ENCODE measurements at regions of chr2 and their contacts with region 1.

Region 1: GRCh38 chr2:162795312-162795711 is 43.3 kb downstream of the KCNH7 start:
- DNase-seq: peak; percentile 27
- ATAC-seq: peak; percentile 92
- H3K4me3 ChIP-seq: no peak overlapping the region
- H3K27ac ChIP-seq: no peak overlapping the region
- H3K4me1 ChIP-seq: 0 out of 2 replicates have a peak, but pooled peaks cover 6% of the 10 kb centered on the region
- H3K27me3 ChIP-seq: no peaks in the 10 kb centered on the region
- CTCF ChIP-seq: peak; percentile 75
- EP300 ChIP-seq: no peak
- POLR2A ChIP-seq: no peak
- RAD21 ChIP-seq: peak; percentile 44; the same call in 1 of the 2 replicates

Region 2: GRCh38 chr2:162333968-162334367 is 461.3 kb before region 1 on chr2:
- CTCF ChIA-PET with region 1: interaction called, 3 read pairs
- POLR2A ChIA-PET with region 1: no interaction called
- in situ Hi-C with region 1: no loop called
- intact Hi-C with region 1: loop called (anchors 5 kb)
- DNase-seq: peak; percentile 38
- ATAC-seq: peak; percentile 95
- H3K4me3 ChIP-seq: no peak overlapping the region
- H3K27ac ChIP-seq: no peak overlapping the region
- H3K4me1 ChIP-seq: no peaks in the 10 kb centered on the region; the same call in 1 of the 2 replicates
- H3K27me3 ChIP-seq: no peaks in the 10 kb centered on the region
- CTCF ChIP-seq: peak; percentile 69
- EP300 ChIP-seq: no peak
- POLR2A ChIP-seq: no peak
- RAD21 ChIP-seq: no peak

Region 3: GRCh38 chr2:162422891-162423290 is 372.4 kb before region 1 on chr2:
- CTCF ChIA-PET with region 1: no interaction called
- POLR2A ChIA-PET with region 1: no interaction called
- in situ Hi-C with region 1: no loop called
- intact Hi-C with region 1: loop called (anchors 5 kb)
- DNase-seq: no peak
- ATAC-seq: peak; percentile 53
- H3K4me3 ChIP-seq: no peak overlapping the region
- H3K27ac ChIP-seq: no peak overlapping the region
- H3K4me1 ChIP-seq: no peaks in the 10 kb centered on the region
- H3K27me3 ChIP-seq: no peaks in the 10 kb centered on the region
- CTCF ChIP-seq: no peak
- EP300 ChIP-seq: no peak
- POLR2A ChIP-seq: no peak
- RAD21 ChIP-seq: no peak